Ascending aorta (tissue), 2 donors: ENCODE measurements at regions of chr6 and their contacts with region 1.

Region 1: DNA sequence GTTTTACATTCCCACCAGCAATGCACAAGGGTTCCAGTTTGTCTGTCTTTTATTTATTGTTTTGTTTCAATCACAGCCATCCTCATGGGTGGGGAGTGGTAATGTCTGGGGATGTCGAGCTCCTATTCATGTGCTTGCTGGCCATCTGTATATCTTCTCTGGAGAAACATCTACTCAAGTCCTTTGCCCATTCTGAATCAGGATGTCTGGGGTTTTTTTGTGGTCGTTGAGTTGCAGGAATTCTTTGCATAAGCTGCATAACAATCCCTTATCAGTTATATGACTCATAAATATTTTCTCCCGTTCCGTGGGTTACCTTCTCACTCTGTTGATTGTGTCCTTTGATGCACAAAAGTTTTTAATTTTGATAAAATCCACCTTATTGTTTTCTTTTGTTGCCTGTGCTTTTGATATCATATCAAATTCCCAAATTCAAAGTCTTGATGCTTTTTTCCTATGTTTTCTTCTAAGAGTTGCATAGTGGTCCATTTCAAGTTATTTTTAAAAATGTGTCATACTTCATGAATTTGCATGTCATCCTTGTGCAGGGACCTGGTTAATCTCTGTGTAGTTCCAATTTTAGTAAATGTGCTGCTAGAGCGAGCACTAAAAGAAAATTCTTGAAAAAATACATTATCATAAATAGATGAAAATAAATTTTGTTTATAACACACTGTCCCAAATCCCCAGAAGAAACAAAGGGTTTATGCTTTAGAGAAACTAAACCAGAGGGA is 54.9 kb upstream of the PDE10A start:
- DNase-seq: no peak
- H3K4me3 ChIP-seq: no peak overlapping the region
- H3K27ac ChIP-seq: peak overlapping the region; percentile 59 to 67
- H3K4me1 ChIP-seq: peaks cover 0 to 4% of the 10 kb centered on the region in 2 donors
- H3K27me3 ChIP-seq: no peaks in the 10 kb centered on the region
- CTCF ChIP-seq: no peak

Region 2: DNA sequence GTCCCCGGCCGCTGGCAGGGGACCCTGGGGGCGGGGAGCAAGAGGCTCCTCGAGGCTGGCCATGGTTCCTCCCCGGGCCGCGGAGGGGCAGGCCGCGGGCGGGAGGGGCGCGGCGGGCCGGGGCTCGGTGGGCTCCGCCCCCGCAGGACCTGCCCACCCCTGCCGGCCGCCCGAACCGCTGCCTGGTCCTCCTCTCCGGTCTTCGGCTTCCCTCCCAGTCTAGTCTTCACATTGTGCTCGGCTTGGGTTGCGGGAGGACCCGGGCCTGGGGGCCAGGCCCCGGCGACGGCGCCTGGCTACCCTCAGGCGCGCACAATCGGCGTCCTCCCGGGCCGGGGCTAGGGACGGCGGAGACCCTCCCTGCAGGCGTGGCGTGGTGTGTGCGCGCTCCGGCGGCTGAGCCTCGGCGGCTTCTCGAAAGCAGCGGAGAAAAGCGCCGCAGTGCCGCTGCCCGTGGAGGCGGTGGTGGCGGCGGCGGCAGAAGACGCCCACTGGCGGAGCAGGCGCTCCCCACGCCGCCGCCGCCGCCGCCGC is 55.1 kb before region 1 on chr6 and contains the start of gene PDE10A:
- intact Hi-C with region 1: loop called (anchors 5 kb)
- DNase-seq: no peak
- H3K4me3 ChIP-seq: peak within 1 kb of the TSS; percentile 69 to 87
- H3K27ac ChIP-seq: peak within 1 kb of the TSS in 1 of 2 donors; percentile 39
- H3K4me1 ChIP-seq: peaks cover 23% of the 10 kb centered on the region in 2 donors
- H3K27me3 ChIP-seq: peaks cover 9% of the 10 kb centered on the region
- CTCF ChIP-seq: no peak
- total RNA-seq, gene PDE10A: 2.0 TPM

Region 3: DNA sequence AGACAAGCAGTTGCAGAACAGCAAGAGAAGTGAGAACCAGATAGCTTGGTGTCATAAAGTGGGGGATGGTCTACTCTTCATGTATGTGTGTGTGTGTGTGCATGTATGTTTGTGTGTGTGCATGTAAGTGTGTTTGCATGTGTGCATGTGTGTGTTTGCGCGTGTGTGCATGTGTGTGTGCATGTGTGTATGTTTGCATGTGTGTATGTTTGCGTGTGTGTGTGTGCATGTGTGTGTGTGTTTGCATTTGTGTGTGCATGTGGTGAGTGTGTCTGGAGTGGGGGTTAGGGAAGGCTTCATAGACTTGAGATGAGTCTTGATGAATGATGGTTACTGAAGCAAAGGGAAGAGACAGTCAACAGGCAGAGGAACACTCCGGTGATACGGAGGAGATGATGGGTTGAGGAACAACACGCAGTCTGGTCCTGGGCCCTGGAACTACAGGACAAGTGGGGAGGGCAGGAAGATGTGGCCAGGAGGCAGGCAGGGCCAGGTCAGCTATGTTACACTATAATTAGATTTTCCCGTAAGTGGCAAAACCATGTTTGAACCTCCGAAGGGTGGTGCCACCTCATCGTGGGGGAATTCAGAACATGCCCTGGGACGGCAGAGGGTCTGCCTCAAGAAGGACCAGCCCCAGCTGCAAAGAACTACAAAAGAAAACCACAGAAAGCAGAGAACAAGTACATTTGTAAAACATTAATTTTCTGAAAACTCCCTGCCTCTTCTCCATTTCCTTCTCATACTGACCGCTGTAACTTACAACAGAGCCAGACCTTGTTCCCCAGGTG is 16.1 kb before region 1 on chr6:
- intact Hi-C with region 1: no loop called
- DNase-seq: no peak
- H3K4me3 ChIP-seq: no peak overlapping the region
- H3K27ac ChIP-seq: no peak overlapping the region
- H3K4me1 ChIP-seq: peaks cover 0 to 4% of the 10 kb centered on the region in 2 donors
- H3K27me3 ChIP-seq: no peaks in the 10 kb centered on the region
- CTCF ChIP-seq: no peak